Activated B cell treated with CpG ODN at 0.5 μM for 24 hours (primary cell): ENCODE measurements at regions of chr5 and their contacts with region 1.

Region 1: DNA sequence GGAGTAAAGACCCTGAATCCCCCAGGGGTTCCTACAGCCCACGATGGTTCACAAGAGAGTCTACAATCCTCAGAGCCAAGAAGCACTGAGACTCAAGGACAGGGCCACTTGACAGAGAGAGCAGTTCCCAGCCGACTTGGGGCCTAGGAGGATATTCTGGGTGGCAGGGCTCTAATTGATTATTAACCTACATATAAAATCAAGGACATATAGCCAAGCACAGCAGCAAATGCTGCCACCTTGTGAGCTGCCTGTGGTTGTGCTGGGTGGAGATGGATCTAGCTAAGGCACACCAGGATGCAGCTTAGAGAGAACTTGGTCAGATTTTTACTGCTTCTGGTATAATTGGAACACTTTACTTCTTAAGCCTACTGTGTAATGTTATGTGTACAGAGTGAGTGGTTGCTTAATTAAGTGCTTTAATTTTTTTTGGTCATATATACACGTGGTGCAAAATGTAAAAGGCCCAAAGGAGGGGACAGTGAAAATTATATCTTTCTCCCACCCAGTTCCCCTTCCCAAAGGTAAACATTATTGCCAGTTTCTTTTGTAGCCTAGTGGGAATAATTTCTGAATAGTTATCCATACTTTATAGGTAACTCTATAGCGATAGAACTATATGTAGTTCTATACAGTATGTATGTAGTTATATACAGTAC is 78.8 kb downstream of the F2RL2 start:
- DNase-seq: no peak
- ATAC-seq: no peak
- H3K4me3 Mint-ChIP-seq: no peak overlapping the region
- H3K27ac Mint-ChIP-seq: no peak overlapping the region
- H3K4me1 Mint-ChIP-seq: peaks cover 45% of the 10 kb centered on the region
- H3K27me3 Mint-ChIP-seq: peaks cover 2% of the 10 kb centered on the region
- CTCF ChIP-seq: no peak

Region 2: GRCh38 chr5:76337953-76338451 is 206.4 kb before region 1 on chr5:
- CTCF ChIA-PET with region 1: interaction called, 6 read pairs
- POLR2A ChIA-PET with region 1: no interaction called
- intact Hi-C with region 1: loop called (anchors 5 kb)
- DNase-seq: no peak
- ATAC-seq: peak; percentile 42
- H3K4me3 Mint-ChIP-seq: no peak overlapping the region
- H3K27ac Mint-ChIP-seq: no peak overlapping the region
- H3K4me1 Mint-ChIP-seq: peaks cover 4% of the 10 kb centered on the region
- H3K27me3 Mint-ChIP-seq: no peaks in the 10 kb centered on the region
- CTCF ChIP-seq: no peak

Region 3: GRCh38 chr5:76556511-76557221 is 12.3 kb after region 1 on chr5:
- CTCF ChIA-PET with region 1: no interaction called
- POLR2A ChIA-PET with region 1: interaction called, 3 read pairs
- intact Hi-C with region 1: loop called (anchors 1 kb)
- DNase-seq: no peak
- ATAC-seq: peak; percentile 95
- H3K4me3 Mint-ChIP-seq: no peak overlapping the region
- H3K27ac Mint-ChIP-seq: peak overlapping the region; percentile 62
- H3K4me1 Mint-ChIP-seq: peaks cover 15% of the 10 kb centered on the region
- H3K27me3 Mint-ChIP-seq: no peaks in the 10 kb centered on the region
- CTCF ChIP-seq: no peak

Region 4: DNA sequence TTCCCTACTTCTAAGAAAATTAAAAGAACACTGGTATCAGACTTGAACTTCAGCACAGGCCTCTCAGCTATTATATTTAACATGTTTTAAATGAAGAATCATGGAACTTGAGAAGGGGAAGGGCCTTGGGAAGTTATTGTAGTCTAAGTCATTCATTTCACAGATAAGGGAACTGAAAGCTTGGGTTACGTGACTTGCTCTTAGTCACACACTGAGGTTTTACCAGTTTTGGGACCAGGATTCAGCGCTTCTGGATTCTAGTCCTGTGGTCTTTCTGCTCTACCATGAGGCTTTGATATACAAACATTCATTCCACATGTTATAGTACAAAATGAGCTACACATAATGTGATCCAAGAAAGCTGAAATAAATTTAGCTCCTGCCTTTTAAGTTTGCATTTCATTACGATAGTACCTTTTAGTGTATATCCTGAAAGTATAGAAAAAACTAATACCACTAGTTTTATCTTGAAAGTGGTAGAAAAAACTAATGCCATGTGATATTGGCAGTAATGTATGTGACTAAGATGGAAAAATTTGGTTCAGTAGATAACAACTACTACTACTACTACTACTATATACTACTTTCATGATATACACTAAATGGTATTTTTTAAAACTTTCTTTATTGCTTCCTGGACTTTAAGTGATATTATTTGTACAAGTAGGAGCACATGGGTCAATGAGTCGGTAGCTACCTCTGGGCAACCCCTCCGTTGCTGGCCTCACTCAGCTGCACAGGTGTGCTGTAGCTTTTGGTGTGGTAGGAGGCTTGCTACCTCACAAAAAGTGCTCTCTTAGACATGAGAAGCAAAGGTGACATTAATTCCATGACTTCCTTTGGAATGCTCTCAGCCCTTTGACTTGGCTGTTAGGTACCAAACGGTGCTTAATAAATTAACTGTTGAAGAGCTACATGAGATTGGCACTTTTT is 38.1 kb after region 1 on chr5:
- CTCF ChIA-PET with region 1: interaction called, 6 read pairs
- POLR2A ChIA-PET with region 1: no interaction called
- intact Hi-C with region 1: loop called (anchors 2 kb)
- DNase-seq: no peak
- ATAC-seq: peak; percentile 74
- H3K4me3 Mint-ChIP-seq: no peak overlapping the region
- H3K27ac Mint-ChIP-seq: no peak overlapping the region
- H3K4me1 Mint-ChIP-seq: peaks cover 17% of the 10 kb centered on the region
- H3K27me3 Mint-ChIP-seq: no peaks in the 10 kb centered on the region
- CTCF ChIP-seq: no peak

Region 5: DNA sequence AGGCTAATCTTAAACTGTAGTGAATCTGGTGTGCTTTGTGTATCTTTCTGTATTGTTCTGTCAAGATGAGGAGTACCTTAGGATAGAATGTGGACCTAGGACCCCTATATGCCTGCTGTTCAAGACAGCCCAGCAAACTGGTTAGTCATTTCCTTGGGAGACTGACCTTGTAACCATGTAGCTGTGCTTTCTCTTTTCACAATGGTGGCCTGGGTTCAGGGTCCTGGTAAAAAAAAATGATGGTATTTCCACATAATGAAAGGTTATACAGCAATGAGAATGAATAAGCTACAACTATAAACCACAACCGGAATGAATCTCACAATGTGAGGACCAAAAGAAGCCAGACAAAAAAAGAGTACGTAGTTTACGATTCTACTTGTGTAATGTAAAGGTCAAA is 238.0 kb after region 1 on chr5:
- CTCF ChIA-PET with region 1: no interaction called
- POLR2A ChIA-PET with region 1: no interaction called
- intact Hi-C with region 1: no loop called
- DNase-seq: no peak
- ATAC-seq: no peak
- H3K4me3 Mint-ChIP-seq: no peak overlapping the region
- H3K27ac Mint-ChIP-seq: no peak overlapping the region
- H3K4me1 Mint-ChIP-seq: peaks cover 7% of the 10 kb centered on the region
- H3K27me3 Mint-ChIP-seq: no peaks in the 10 kb centered on the region
- CTCF ChIP-seq: no peak

Region 6: GRCh38 chr5:76983468-76983867 is 439.1 kb after region 1 on chr5:
- CTCF ChIA-PET with region 1: no interaction called
- POLR2A ChIA-PET with region 1: no interaction called
- intact Hi-C with region 1: no loop called
- DNase-seq: no peak
- ATAC-seq: no peak
- H3K4me3 Mint-ChIP-seq: no peak overlapping the region
- H3K27ac Mint-ChIP-seq: no peak overlapping the region
- H3K4me1 Mint-ChIP-seq: no peaks in the 10 kb centered on the region
- H3K27me3 Mint-ChIP-seq: no peaks in the 10 kb centered on the region
- CTCF ChIP-seq: no peak